Colonic mucosa (tissue), 4 donors: ENCODE measurements at regions of chr10 and their contacts with region 1.

Region 1: GRCh38 chr10:79542626-79543025 is 17.6 kb downstream of the SFTPA2 start:
- DNase-seq: no peak
- H3K4me3 ChIP-seq: no peak overlapping the region
- H3K27ac ChIP-seq: no peak overlapping the region
- H3K4me1 ChIP-seq: no peaks in the 10 kb centered on the region
- H3K27me3 ChIP-seq: no peaks in the 10 kb centered on the region
- CTCF ChIP-seq: no peak

Region 2: GRCh38 chr10:79385804-79386531 is 156.7 kb before region 1 on chr10:
- intact Hi-C with region 1: no loop called
- DNase-seq: peak; percentile 17
- H3K4me3 ChIP-seq: no peak overlapping the region
- H3K27ac ChIP-seq: no peak overlapping the region
- H3K4me1 ChIP-seq: no peaks in the 10 kb centered on the region
- H3K27me3 ChIP-seq: no peaks in the 10 kb centered on the region
- CTCF ChIP-seq: no peak

Region 3: GRCh38 chr10:79400146-79401004 is 142.3 kb before region 1 on chr10:
- intact Hi-C with region 1: no loop called
- DNase-seq: peak; percentile 62
- H3K4me3 ChIP-seq: no peak overlapping the region
- H3K27ac ChIP-seq: peak overlapping the region; percentile 60
- H3K4me1 ChIP-seq: peaks cover 5% of the 10 kb centered on the region
- H3K27me3 ChIP-seq: no peaks in the 10 kb centered on the region
- CTCF ChIP-seq: peak; percentile 50

Region 4: DNA sequence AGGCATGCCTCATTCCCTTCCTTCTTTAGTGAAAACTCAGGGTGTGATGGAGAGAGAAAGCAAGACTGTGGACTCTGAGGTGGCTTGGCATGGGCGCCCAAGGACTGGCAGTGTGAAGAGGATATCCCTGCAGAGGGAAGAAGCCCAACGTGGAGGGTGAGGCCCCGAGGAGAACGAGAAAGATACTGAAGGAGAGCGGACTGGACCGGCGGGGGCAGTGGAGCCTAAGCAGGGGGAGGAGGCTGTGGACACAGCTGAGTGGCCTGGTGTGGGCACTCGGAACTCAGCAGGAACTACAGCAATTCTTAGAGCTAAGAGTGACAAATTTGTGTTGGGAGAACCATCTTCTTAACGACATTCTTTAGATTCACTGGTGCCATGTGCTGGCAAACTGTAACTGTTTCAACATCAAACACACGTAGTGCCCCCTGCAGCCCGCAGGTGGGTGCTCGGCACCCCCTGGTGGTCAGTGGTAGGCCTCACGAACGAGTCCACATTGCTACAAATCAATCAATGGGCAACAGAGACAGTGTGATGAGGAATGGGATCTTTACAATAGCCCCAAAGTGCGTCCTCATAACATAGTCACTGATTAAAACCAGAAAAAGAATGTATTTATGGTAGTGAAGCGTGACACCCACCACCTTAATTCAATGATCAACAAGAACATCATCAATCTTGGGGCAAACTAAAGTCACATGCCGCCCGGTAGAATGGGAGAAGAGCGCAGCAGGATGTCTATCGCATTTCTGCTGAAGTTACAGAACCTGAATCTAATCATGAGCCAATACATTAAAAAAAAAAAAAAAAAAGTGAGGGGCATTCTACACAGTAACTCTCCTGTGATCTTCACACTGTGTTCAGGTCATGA is 66.1 kb after region 1 on chr10:
- intact Hi-C with region 1: loop called (anchors 5 kb)
- DNase-seq: peak; percentile 34
- H3K4me3 ChIP-seq: no peak overlapping the region
- H3K27ac ChIP-seq: no peak overlapping the region
- H3K4me1 ChIP-seq: no peaks in the 10 kb centered on the region
- H3K27me3 ChIP-seq: no peaks in the 10 kb centered on the region
- CTCF ChIP-seq: peak; percentile 44

Region 5: DNA sequence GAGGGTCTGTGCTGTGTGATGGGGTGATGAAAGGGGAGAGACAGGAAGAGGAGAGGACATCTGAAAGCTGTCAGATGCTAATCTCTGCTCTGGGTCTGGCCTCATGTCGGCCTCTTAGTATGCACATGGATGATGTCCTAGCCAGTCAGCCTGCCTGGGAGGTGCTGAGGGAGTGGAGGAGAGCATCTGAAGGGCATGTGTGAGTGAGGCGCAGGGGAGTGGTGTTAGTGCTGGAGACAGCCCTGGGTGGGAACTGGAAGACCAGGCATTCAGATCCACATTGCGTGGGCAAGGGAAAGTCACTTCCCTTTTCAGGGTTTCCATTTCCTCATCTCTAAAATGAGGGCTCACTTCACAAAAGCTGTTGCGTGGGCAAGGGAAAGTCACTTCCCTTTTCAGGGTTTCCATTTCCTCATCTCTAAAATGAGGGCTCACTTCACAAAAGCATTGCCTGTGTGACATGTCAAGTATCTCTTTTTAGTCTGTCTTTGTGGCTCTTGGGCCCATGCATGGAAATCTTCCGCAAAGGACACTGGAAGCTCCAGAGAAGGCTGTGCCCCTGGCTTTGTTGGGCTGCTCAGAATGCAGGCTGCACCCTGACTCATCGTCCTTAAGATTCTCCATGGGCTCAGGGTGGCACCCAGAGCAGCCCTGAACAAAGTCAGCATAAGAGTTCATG is 396.2 kb after region 1 on chr10:
- intact Hi-C with region 1: loop called (anchors 10 kb)
- DNase-seq: peak; percentile 24
- H3K4me3 ChIP-seq: no peak overlapping the region
- H3K27ac ChIP-seq: no peak overlapping the region
- H3K4me1 ChIP-seq: no peaks in the 10 kb centered on the region
- H3K27me3 ChIP-seq: no peaks in the 10 kb centered on the region
- CTCF ChIP-seq: no peak